GM23248 (cell line): ENCODE measurements at regions of chr16 and their contacts with region 1.

Region 1: GRCh38 chr16:30914830-30915229 is 8.5 kb upstream of the FBXL19 start:
- DNase-seq: no peak
- H3K4me3 ChIP-seq: no peak overlapping the region
- H3K27ac ChIP-seq: no peak overlapping the region
- H3K4me1 ChIP-seq: no peaks in the 10 kb centered on the region
- H3K27me3 ChIP-seq: no peaks in the 10 kb centered on the region

Region 2: GRCh38 chr16:30844671-30845449 is 70.0 kb before region 1 on chr16:
- in situ Hi-C with region 1: loop called (anchors 5 kb)
- DNase-seq: peak; percentile 94
- H3K4me3 ChIP-seq: peak overlapping the region; percentile 62
- H3K27ac ChIP-seq: no peak overlapping the region
- H3K4me1 ChIP-seq: peaks cover 6% of the 10 kb centered on the region; the same call in 1 of the 2 replicates
- H3K27me3 ChIP-seq: no peaks in the 10 kb centered on the region